ENCODE measurements at regions of chr7 and their contacts with region 1.

Region 1: DNA sequence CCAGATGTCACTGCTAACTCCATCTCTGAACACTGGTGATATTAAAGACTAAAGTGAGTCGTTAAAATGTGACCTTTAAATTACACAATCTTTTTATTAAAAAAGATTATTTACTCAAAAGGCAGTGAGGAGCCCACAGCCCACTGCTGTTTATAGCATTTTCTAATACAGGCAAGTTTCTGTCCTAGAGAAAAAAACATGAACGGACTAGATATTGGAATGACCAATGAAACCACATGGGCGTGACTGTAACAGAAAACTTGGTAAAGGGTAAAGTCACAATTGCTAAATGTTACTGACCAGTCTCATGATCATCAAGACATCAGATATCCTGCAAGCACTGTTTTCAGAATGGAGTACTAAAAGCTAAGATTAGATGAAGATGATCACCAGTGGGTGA is 78.7 kb downstream of the FEZF1 start:
- DNase-seq: no peak
- H3K4me3 ChIP-seq: no peak overlapping the region
- H3K27ac ChIP-seq: no peak overlapping the region
- H3K4me1 ChIP-seq: no peaks in the 10 kb centered on the region
- H3K27me3 ChIP-seq: no peaks in the 10 kb centered on the region
- CTCF ChIP-seq: no peak
- POLR2A ChIP-seq: no peak

Region 2: DNA sequence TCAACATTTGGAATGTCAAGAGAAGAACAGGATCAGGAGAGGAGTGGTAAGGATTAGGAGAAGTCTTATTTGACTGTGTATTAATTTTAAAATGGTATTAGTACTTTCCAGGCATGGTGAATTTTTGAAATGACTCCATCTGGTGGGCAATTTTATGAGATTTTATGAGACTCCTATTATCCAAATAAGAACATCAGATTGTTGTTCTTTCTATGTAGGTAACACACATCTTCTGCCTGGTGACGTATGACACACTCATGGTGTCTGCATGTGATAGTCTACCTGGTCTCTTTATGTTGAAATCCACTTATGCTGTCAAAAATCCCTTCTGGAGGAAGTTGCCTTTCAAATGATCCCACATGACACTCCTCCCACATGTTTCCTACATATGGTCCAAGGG is 923.0 kb after region 1 on chr7:
- intact Hi-C with region 1: loop called (anchors 10 kb)
- DNase-seq: no peak
- H3K4me3 ChIP-seq: no peak overlapping the region
- H3K27ac ChIP-seq: no peak overlapping the region
- H3K4me1 ChIP-seq: no peaks in the 10 kb centered on the region
- H3K27me3 ChIP-seq: no peaks in the 10 kb centered on the region
- CTCF ChIP-seq: no peak
- POLR2A ChIP-seq: no peak

Measured in spleen (tissue), 13 donors.